OCI-LY7 (cell line): ENCODE measurements at regions of chr6 and their contacts with region 1.

Region 1: DNA sequence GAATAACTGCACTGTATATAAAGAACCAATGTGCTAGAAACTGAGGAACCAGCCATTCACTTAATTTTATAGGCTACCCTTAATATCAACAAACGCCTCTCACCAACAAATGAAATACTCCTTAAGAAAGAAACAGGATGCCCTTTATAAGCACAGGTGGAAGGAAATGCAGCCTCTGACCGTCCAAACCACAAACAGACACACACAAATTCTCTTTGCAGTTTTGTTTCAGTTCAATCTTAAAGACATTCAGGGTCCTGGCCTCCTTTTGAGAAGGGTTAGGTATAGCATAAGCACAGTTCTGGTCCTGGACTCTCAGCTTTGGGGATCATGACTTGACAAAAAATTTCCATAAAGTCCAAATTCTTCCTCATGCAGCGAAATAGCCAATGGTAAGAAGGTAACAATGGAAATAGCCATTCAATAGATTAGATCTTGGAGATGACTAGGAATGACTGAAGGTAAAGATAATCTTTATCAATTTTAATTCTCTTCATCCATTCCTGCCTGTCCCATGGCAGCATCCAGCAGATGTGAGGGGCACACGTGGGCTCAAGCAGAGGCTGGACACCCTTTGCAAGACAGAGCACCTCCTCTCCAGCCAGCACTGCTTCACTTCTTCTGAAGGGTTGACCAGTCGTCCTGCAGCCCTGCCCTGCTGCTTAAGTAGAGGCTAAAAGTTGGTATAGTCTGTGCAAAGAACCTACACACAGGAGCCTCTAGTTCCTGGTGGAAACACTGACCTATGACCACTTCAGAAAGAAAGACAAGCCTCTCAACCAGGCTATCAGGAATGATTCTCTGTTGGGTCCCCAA is 123.9 kb downstream of the CD83 start:
- DNase-seq: peak; percentile 95
- H3K4me3 ChIP-seq: peak overlapping the region; percentile 56
- H3K27ac ChIP-seq: peak overlapping the region; percentile 100
- H3K4me1 ChIP-seq: peaks cover 95% of the 10 kb centered on the region
- CTCF ChIP-seq: no peak

Region 2: DNA sequence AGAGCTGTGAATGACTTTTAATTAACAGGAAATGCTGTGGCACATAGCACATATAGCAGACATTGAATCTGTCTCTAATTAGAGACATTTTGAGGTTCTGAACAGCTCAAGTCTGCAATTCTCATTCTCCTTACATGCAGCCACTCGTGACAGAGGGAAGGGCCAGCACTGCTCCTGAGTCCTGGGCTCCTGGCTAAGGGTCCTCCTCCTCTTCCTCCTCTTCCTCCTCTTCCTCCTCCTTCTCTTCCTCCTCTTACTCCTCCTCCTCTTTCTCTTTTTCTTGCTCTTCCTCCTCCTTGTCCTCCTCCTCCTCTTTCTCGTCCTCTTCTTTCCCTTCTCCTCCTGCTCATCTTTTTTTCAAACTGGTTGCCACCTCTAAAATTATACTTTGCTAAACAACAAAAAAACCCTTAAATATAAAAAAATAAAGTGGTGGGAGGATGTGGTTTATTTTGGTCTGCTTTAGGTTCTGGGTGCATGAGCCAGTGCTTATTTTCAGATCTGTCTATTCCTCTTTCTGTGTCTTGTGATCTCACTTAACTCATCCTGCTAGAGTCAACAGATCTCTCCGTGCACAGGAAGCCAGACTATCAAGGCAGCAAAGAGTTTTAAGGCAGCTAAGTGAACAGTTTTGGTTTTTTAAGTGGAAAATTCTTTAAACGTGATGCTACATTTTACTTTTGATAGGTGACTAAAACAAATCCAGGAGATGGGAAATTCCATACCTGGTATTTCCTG is 35.4 kb after region 1 on chr6:
- CTCF ChIA-PET with region 1: no interaction called
- POLR2A ChIA-PET with region 1: interaction called, 9 read pairs
- intact Hi-C with region 1: loop called (anchors 1 kb)
- DNase-seq: peak; percentile 89
- H3K4me3 ChIP-seq: peak overlapping the region; percentile 44
- H3K27ac ChIP-seq: peak overlapping the region; percentile 95
- H3K4me1 ChIP-seq: peaks cover 60% of the 10 kb centered on the region
- CTCF ChIP-seq: no peak

Region 3: GRCh38 chr6:14371530-14371929 is 130.1 kb after region 1 on chr6:
- CTCF ChIA-PET with region 1: no interaction called
- POLR2A ChIA-PET with region 1: no interaction called
- intact Hi-C with region 1: no loop called
- DNase-seq: no peak
- H3K4me3 ChIP-seq: no peak overlapping the region
- H3K27ac ChIP-seq: no peak overlapping the region
- H3K4me1 ChIP-seq: peaks cover 19% of the 10 kb centered on the region
- CTCF ChIP-seq: no peak

Region 4: GRCh38 chr6:15305496-15305895 is 1064.0 kb after region 1 on chr6:
- CTCF ChIA-PET with region 1: no interaction called
- POLR2A ChIA-PET with region 1: interaction called, 11 read pairs
- intact Hi-C with region 1: no loop called
- DNase-seq: no peak
- H3K4me3 ChIP-seq: no peak overlapping the region
- H3K27ac ChIP-seq: no peak overlapping the region
- H3K4me1 ChIP-seq: peaks cover 62% of the 10 kb centered on the region
- CTCF ChIP-seq: no peak